Uterus (tissue), 4 donors: ENCODE measurements at regions of chr3 and their contacts with region 1.

Region 1: DNA sequence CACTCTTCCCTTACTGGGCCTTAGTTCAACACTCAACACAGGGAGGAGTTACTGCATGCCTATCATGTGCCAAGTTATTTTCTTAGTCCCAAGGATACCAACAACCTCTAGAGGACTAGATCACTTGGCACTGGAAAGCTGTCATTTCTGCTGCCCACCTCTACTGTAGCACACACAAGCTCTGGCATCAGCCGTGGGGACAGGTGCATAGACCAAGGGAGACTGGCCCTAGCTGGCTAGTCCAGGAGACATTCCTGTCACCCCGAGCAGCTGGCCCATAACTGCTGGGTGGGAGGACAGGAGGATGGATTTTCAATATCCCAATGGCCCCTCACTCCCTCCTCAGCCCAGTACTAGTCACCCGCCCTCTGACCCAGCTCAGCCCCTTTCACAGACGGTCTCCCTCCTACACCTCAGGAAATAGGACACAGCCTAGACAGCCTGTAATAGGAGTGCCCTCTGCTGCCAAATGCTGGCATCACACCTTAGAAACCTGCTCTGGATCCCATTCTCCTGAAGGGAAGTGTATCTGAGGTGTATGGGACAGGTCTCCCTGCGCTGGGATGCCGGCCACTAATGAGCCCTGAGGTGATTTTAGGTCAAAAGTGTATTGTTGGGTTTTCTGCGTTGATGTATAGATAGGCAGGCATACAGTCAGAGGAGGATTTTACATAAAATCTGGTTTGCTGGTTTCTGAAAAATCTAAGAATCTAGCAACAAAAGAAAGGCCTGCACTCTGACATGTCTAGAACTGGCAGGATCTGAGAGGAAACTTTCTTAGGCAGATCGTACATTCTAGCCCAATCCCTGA is 3.4 kb upstream of the DZIP1L start:
- DNase-seq: peak; percentile 74 to 79
- H3K4me3 ChIP-seq: no peak overlapping the region
- H3K27ac ChIP-seq: peak overlapping the region in 1 of 2 donors; percentile 10
- H3K4me1 ChIP-seq: peaks cover 0 to 1% of the 10 kb centered on the region in 2 donors
- H3K27me3 ChIP-seq: no peaks in the 10 kb centered on the region
- CTCF ChIP-seq: peak; percentile 76 to 82 (median 78)
- POLR2A ChIP-seq: no peak

Region 2: DNA sequence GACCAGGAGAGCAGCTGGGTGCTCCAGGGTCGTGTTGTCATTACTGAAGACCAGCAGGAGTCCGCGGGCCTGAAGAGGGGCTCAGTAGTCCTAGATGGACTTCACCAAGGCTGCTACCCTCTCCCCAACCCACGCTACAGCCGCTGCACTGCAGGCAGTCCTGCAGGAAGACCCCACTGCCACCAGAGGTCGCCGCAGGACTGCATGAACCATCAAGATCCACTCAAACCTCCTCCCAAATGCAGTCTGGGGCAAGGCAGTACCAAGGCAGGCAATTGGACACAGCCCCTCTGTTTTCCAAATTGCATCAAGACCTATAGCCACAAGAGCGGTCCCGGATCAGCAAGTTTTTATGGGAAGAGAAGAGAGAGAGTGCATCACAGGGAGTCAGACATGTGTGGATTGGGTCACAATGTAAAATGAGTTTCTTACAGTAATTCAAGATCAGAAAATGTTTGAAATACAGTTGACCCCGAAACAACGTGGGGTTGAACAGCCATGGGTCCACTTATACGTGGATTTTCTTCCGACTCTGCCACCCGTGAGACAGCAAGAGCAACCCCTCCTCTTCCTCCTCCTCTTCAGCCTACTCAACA is 50.1 kb before region 1 on chr3:
- intact Hi-C with region 1: loop called (anchors 5 kb)
- DNase-seq: peak; percentile 71 to 78
- H3K4me3 ChIP-seq: no peak overlapping the region
- H3K27ac ChIP-seq: no peak overlapping the region
- H3K4me1 ChIP-seq: no peaks in the 10 kb centered on the region
- H3K27me3 ChIP-seq: no peaks in the 10 kb centered on the region
- CTCF ChIP-seq: peak; percentile 94 to 97 (median 96)
- POLR2A ChIP-seq: no peak